ENCODE measurements at regions of chr6 and their contacts with region 1.

Region 1: GRCh38 chr6:158031381-158032353 is 50.0 kb downstream of the SYNJ2 start:
- DNase-seq: peak; percentile 62
- H3K4me3 Mint-ChIP-seq: no peak overlapping the region
- H3K27ac Mint-ChIP-seq: peak overlapping the region; percentile 81
- H3K4me1 Mint-ChIP-seq: peaks cover 43% of the 10 kb centered on the region
- H3K27me3 Mint-ChIP-seq: no peaks in the 10 kb centered on the region

Region 2: DNA sequence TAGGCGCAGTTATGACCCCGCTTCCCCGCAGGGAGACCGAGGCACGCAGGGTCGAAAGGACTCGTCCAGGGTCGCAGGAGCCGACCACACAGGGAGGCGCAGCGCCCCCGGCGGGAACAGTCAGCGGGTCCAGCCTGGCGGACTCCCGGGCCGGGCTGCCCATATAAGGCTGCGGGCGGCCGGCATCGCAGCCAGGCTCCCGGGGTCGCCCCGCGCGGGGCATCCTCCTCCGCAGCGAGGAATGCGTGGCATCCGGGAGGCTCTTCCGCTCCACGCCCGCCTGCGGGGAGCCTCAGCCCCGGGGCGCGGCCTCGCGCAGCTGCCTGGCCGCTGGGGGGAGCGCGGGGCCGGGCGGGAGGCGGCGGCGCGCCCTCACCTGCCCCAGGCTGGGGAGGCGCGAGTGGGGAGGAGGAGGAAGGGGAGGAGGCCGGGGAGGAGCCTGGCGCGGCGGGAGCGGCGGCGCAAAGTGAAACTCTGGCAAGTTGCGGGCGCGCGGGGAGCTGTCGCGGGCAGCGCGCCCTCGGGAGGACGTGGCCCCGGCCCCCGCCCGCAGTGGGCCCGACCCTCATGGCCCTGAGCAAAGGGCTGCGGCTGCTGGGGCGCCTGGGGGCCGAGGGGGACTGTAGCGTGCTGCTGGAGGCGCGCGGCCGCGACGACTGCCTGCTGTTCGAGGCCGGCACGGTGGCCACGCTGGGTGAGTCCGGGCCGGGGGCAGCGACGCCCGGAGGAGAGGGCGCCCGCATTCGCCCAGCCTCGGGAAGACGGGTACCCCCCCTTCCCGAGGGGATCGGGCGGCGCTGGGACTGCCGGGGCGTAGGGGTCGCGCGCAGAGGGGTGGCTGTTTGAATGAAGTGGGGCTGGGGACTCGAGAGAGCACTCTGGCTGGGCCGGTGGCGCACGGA is 50.0 kb before region 1 on chr6 and contains the start of gene SYNJ2:
- CTCF ChIA-PET with region 1: interaction called, 67 read pairs
- POLR2A ChIA-PET with region 1: interaction called, 33 read pairs
- DNase-seq: peak; percentile 90
- H3K4me3 Mint-ChIP-seq: peak within 1 kb of the TSS; percentile 96
- H3K27ac Mint-ChIP-seq: peak within 1 kb of the TSS; percentile 80
- H3K4me1 Mint-ChIP-seq: peaks cover 57% of the 10 kb centered on the region
- H3K27me3 Mint-ChIP-seq: peaks cover 8% of the 10 kb centered on the region
- total RNA-seq, gene SYNJ2: 36.8 to 39.1 TPM